CD4-positive, alpha-beta T cell (primary cell): ENCODE measurements at regions of chr2 and their contacts with region 1.

Region 1: DNA sequence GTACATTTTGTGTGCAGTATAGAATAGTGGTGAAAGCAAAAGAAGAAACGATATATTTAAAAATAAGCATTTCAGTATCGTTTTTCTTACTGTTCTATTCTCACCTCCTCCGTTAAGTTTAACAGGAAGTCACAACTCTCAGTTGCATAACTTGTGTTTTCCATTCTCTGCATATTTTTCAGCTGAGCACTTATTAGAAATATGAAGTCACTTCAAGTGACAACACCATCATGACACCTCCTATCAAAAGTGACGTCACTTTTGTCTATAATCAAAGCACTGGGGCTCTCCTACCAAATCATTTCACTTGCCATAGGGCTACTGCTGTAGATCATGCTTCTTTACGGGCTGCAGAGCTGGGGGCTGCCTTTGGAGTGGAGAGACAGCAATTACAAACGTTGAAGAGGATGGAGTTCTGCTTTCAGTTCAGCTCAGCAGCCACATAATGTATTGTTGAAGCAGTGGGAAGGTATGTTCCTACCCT is 36.3 kb downstream of the STAT4 start:
- DNase-seq: peak in 5 of 14 experiments; percentile 12 to 88 (median 61)
- ATAC-seq: peak; percentile 61
- H3K4me3 ChIP-seq: no peak overlapping the region
- H3K4me3 Mint-ChIP-seq: peak overlapping the region; percentile 31
- H3K27ac ChIP-seq: peak overlapping the region in 1 of 2 donors; percentile 64
- H3K27ac Mint-ChIP-seq: peak overlapping the region; percentile 83
- H3K4me1 ChIP-seq: peaks cover 26% of the 10 kb centered on the region
- H3K4me1 Mint-ChIP-seq: peaks cover 50% of the 10 kb centered on the region
- H3K27me3 ChIP-seq: no peaks in the 10 kb centered on the region
- H3K27me3 Mint-ChIP-seq: no peaks in the 10 kb centered on the region
- CTCF ChIP-seq: no peak

Region 2: DNA sequence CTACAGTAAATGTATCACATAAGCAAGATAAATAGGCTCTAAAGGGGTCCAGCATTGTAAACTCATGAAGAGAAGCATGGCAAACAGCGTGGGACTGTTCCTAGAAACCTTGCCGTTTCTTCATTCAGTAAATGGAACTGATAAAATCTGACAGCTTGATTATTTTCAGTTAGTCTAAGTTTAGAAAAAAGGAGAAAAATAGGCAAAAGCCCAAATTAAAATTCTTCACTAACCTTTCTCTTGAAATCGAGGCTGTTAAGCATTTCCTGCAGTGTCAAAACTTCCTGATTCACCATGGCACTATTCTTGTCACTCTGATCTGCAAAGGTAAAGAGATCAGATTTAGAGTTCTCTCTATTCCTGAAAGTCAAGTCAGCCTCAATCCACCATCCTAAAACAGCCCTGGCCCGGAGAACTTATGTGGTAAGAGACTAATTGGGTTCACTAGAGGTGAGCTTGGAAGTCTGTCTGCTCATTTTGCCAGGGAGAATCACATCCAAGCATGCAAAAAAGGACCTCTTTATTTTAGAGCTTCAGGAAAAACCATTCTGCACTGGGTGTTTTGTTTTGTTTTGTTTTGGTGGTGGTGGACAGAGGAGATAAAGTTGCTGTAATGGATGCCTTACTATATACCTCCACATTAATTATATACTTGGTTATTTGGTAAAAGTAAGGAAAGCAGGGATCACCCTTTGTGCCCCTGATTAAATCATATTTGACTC is 48.1 kb before region 1 on chr2:
- CTCF ChIA-PET with region 1: no interaction called
- POLR2A ChIA-PET with region 1: interaction called, 7 read pairs
- intact Hi-C with region 1: loop called in 1 of 2 experiments (anchors 10 kb)
- DNase-seq: peak in 2 of 14 experiments; percentile 25 to 49
- ATAC-seq: peak; percentile 30
- H3K4me3 ChIP-seq: peak overlapping the region; percentile 3
- H3K4me3 Mint-ChIP-seq: peak overlapping the region; percentile 73
- H3K27ac ChIP-seq: peak overlapping the region; percentile 14 to 42
- H3K27ac Mint-ChIP-seq: peak overlapping the region; percentile 85
- H3K4me1 ChIP-seq: peaks cover 26% of the 10 kb centered on the region
- H3K4me1 Mint-ChIP-seq: peaks cover 81% of the 10 kb centered on the region
- H3K27me3 ChIP-seq: no peaks in the 10 kb centered on the region
- H3K27me3 Mint-ChIP-seq: no peaks in the 10 kb centered on the region
- CTCF ChIP-seq: no peak

Region 3: DNA sequence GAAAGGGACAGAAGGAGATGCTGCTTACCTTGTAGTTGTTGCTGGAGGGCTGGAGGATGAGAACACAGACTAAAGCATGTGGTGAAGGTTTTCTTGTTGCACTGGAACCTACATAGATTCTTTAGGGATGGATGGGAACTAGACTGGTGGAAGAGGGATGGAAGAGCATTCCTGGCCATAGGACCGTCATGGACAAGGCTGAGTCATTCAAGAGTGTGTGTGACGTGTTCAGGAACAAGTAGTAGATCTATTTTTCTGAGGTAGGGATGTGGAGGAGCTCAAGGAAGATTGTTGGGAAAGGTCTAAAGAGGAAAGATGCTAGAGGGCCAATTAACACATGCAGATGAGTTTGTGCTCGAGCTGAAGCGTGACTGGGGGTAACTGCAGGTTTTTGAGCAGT is 29.8 kb after region 1 on chr2:
- CTCF ChIA-PET with region 1: interaction called, 3 read pairs
- POLR2A ChIA-PET with region 1: interaction called, 11 read pairs
- intact Hi-C with region 1: loop called in 1 of 2 experiments (anchors 5 kb)
- DNase-seq: no peak
- ATAC-seq: no peak
- H3K4me3 ChIP-seq: no peak overlapping the region
- H3K4me3 Mint-ChIP-seq: no peak overlapping the region
- H3K27ac ChIP-seq: no peak overlapping the region
- H3K27ac Mint-ChIP-seq: no peak overlapping the region
- H3K4me1 ChIP-seq: peaks cover 20% of the 10 kb centered on the region
- H3K4me1 Mint-ChIP-seq: peaks cover 74% of the 10 kb centered on the region
- H3K27me3 ChIP-seq: no peaks in the 10 kb centered on the region
- H3K27me3 Mint-ChIP-seq: no peaks in the 10 kb centered on the region
- CTCF ChIP-seq: no peak